HepG2 (cell line): ENCODE measurements at regions of chr16 and their contacts with region 1.

Region 1: DNA sequence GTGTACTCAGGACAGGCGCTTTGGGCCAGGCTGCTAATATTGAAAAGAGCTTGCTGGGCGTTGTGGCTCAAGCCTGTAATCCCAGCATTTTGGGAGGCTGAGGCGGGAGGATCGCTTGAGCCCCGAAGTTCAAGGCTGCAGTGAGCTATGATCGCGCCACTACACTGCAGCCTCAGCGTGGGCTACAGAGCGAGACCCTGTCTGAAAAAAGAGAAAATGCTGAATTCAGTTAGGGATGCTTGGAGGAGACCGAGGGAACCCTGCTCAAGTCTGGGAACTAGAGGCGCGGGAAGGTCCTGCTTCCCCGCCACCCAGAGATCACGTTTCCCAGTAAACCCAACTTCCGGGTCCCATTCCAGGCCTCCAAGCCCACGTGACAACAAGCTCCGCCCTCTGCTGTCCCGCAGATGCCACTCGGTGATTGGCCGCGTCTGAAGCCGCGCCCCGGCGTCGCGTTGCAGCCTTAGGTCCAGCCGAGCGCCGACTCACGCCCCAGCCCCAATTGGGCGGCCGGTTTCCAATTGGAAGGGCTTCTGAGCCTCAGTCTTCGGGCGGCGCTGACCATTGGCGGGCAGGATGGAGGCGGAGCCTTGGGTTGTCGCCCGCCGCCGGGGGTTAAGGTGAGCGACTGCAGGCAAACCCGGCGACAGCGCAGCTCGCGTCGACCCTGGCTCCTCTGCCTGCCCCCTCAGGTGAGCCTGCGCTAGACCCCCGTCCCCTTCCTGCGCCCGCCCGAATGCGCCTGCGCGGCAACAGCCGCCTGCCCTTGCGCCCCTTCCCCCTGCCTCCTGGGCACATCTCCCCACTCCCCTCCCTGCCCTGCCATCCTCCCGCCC is at the start of gene PHKG2:
- DNase-seq: peak; percentile 99
- ATAC-seq: peak; percentile 97
- H3K4me3 ChIP-seq: peak within 1 kb of the TSS; percentile 73 to 89 (median 82)
- H3K27ac ChIP-seq: peak within 1 kb of the TSS; percentile 77
- H3K4me1 ChIP-seq: peaks cover 51% of the 10 kb centered on the region
- H3K27me3 ChIP-seq: no peaks in the 10 kb centered on the region
- CTCF ChIP-seq: no peak
- EP300 ChIP-seq: peak; percentile 28 to 35; a peak in 3 of 4 replicates
- POLR2A ChIP-seq: peak; percentile 92 to 96
- RAD21 ChIP-seq: peak; percentile 22; the same call in 1 of the 2 replicates
- total RNA-seq, gene PHKG2: 33.9 and 37.4 TPM in 2 replicates

Region 2: DNA sequence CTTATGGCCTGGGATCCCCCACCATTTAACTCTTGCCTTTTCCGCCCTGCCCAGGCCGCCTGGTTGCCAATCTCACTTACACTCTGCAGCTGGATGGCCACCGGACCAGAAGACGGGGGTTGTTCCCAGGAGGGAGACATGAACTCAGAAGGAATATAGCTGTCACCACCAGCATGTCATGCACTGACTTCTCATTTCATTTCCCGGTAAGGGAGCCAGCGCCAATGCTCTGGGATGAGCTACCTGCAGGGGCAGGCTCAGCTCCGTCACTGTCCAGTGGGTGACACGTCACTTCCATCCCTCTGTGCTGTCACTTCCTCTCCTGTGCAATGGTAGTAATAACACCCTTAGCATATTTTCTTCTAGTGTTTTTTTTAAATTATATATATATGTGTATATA is 248.7 kb before region 1 on chr16:
- CTCF ChIA-PET with region 1: no interaction called
- POLR2A ChIA-PET with region 1: no interaction called
- in situ Hi-C with region 1: no loop called
- intact Hi-C with region 1: no loop called
- DNase-seq: no peak
- ATAC-seq: peak; percentile 67
- H3K4me3 ChIP-seq: peak overlapping the region in 1 of 3 experiments; percentile 34; a peak in 2 of 6 replicates
- H3K27ac ChIP-seq: no peak overlapping the region
- H3K4me1 ChIP-seq: no peaks in the 10 kb centered on the region
- H3K27me3 ChIP-seq: no peaks in the 10 kb centered on the region; a peak in 1 of 5 replicates
- CTCF ChIP-seq: no peak
- EP300 ChIP-seq: no peak
- POLR2A ChIP-seq: no peak
- RAD21 ChIP-seq: no peak

Region 3: GRCh38 chr16:30657866-30658730 is 89.9 kb before region 1 on chr16 and contains the start of gene FBRS:
- CTCF ChIA-PET with region 1: no interaction called
- POLR2A ChIA-PET with region 1: interaction called, 12 read pairs
- in situ Hi-C with region 1: no loop called
- intact Hi-C with region 1: no loop called
- DNase-seq: peak; percentile 100
- ATAC-seq: peak; percentile 85
- H3K4me3 ChIP-seq: peak within 1 kb of the TSS; percentile 78 to 89 (median 82)
- H3K27ac ChIP-seq: peak within 1 kb of the TSS; percentile 93
- H3K4me1 ChIP-seq: peaks cover 36% of the 10 kb centered on the region
- H3K27me3 ChIP-seq: no peaks in the 10 kb centered on the region; a peak in 1 of 5 replicates
- CTCF ChIP-seq: peak; percentile 97
- EP300 ChIP-seq: peak in 1 of 2 experiments; percentile 22; a peak in 2 of 4 replicates
- POLR2A ChIP-seq: peak; percentile 76 to 86
- RAD21 ChIP-seq: peak; percentile 97
- total RNA-seq, gene FBRS: 10.1 and 16.2 TPM in 2 replicates

Region 4: GRCh38 chr16:30728899-30729672 is 18.9 kb before region 1 on chr16:
- CTCF ChIA-PET with region 1: no interaction called
- POLR2A ChIA-PET with region 1: interaction called, 14 read pairs
- in situ Hi-C with region 1: no loop called
- intact Hi-C with region 1: no loop called
- DNase-seq: no peak
- ATAC-seq: no peak; the same call in 2 of the 3 replicates
- H3K4me3 ChIP-seq: no peak overlapping the region
- H3K27ac ChIP-seq: no peak overlapping the region
- H3K4me1 ChIP-seq: no peaks in the 10 kb centered on the region
- H3K27me3 ChIP-seq: no peaks in the 10 kb centered on the region
- CTCF ChIP-seq: no peak
- EP300 ChIP-seq: no peak
- POLR2A ChIP-seq: no peak
- RAD21 ChIP-seq: no peak

Region 5: DNA sequence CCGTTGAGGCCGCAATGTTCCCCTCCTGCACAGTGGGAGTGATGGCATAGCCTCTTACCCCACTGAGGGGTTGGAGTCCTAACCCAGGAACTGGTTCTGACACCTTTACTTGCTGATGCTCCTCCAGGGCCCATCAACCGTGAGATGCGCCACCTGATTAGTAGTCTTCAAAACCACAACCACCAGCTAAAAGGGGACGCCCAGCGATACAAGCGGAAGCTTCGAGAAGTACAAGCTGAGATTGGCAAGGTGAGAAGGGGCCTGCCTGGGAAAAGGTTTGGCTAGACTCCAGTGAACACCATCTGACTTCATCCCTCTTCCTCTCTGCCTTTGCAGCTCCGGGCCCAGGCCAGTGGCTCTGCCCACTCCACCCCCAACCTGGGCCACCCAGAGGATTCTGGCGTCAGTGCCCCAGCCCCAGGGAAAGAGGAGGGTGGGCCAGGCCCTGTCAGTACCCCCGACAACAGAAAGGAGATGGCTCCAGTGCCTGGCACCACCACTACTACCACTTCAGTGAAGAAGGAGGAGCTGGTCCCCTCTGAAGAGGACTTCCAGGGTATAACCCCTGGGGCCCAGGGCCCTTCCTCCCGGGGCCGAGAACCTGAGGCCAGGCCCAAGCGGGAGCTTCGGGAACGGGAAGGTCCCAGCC is 19.9 kb after region 1 on chr16:
- CTCF ChIA-PET with region 1: no interaction called
- POLR2A ChIA-PET with region 1: interaction called, 18 read pairs
- in situ Hi-C with region 1: no loop called
- intact Hi-C with region 1: no loop called
- DNase-seq: no peak
- ATAC-seq: no peak
- H3K4me3 ChIP-seq: no peak overlapping the region
- H3K27ac ChIP-seq: no peak overlapping the region
- H3K4me1 ChIP-seq: peaks cover 16% of the 10 kb centered on the region
- H3K27me3 ChIP-seq: no peaks in the 10 kb centered on the region; a peak in 1 of 5 replicates
- CTCF ChIP-seq: no peak
- EP300 ChIP-seq: no peak
- POLR2A ChIP-seq: no peak
- RAD21 ChIP-seq: no peak

Region 6: DNA sequence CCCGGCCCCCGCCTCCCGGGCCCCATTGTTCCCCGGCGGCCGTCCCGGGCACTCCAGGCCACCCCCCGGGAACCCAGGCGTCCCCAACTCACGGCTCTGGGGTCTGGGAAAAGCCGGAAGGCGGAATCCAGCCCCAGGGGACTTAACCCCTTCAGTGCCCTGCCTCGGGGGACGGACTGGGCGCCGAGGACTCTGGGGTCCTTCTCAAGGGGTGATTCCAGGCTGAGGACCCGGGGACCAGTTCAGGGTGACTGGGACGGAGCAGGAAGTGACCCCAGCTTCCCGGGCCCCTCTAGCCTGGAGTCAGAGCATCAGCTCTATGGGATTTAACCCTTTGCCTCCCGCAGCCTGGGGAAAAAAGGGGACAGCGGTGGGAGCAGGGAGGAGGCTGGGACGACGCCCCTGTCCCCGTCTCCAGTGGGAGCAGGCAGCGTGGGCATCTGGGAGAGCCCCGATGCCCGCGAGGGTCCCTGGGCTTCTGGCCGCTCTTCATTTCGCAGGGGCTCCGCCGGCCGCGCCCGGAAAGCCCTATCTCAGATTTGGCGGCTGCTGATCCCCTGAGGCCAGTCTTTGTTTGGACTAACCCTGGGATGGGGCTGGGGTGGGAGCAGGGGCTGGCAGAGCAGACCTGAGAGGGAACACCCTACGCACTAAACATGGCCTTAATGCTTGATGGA is 39.1 kb after region 1 on chr16 and contains the start of gene ZNF629:
- CTCF ChIA-PET with region 1: no interaction called
- POLR2A ChIA-PET with region 1: interaction called, 20 read pairs
- in situ Hi-C with region 1: no loop called
- intact Hi-C with region 1: no loop called
- DNase-seq: peak; percentile 79
- ATAC-seq: peak; percentile 83
- H3K4me3 ChIP-seq: peak within 1 kb of the TSS; percentile 99 to 100 (median 100)
- H3K27ac ChIP-seq: peak within 1 kb of the TSS; percentile 78
- H3K4me1 ChIP-seq: peaks cover 30% of the 10 kb centered on the region
- H3K27me3 ChIP-seq: peaks cover 3 to 5% of the 10 kb centered on the region in 2 experiments; a peak in 2 of 5 replicates
- CTCF ChIP-seq: peak; percentile 43
- EP300 ChIP-seq: peak in 1 of 2 experiments; percentile 46; a peak in 2 of 4 replicates
- POLR2A ChIP-seq: peak; percentile 47 to 52
- RAD21 ChIP-seq: peak; percentile 62
- total RNA-seq, gene ZNF629: 14.3 and 16.5 TPM in 2 replicates

Region 7: DNA sequence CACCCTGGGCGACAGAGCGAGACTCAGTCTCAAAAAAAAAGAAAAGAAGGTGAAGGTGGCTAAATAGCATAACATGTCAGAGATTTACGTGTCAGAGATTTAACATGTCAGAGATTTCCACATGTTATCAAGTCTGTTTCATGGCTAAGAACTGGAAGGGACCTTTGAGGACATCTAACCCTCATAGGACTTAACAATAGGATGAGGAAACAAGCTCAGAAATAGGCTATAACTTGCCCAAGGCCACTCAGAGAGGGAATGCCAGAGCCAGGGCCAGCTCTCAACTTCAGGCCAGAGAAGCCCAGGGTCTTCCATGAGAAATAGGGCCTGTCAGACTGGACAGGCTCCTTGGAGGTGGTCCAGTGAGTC is 65.8 kb after region 1 on chr16:
- CTCF ChIA-PET with region 1: no interaction called
- POLR2A ChIA-PET with region 1: interaction called, 35 read pairs
- in situ Hi-C with region 1: no loop called
- intact Hi-C with region 1: loop called (anchors 10 kb)
- DNase-seq: no peak
- ATAC-seq: no peak
- H3K4me3 ChIP-seq: peak overlapping the region; percentile 38 to 70 (median 59); a peak in 5 of 6 replicates
- H3K27ac ChIP-seq: peak overlapping the region; percentile 91
- H3K4me1 ChIP-seq: peaks cover 47% of the 10 kb centered on the region
- H3K27me3 ChIP-seq: no peaks in the 10 kb centered on the region
- CTCF ChIP-seq: no peak
- EP300 ChIP-seq: no peak
- POLR2A ChIP-seq: no peak
- RAD21 ChIP-seq: no peak

Region 8: GRCh38 chr16:30837894-30838505 is 90.0 kb after region 1 on chr16:
- CTCF ChIA-PET with region 1: no interaction called
- POLR2A ChIA-PET with region 1: no interaction called
- in situ Hi-C with region 1: no loop called
- intact Hi-C with region 1: no loop called
- DNase-seq: no peak
- ATAC-seq: no peak
- H3K4me3 ChIP-seq: no peak overlapping the region
- H3K27ac ChIP-seq: peak overlapping the region; percentile 9
- H3K4me1 ChIP-seq: peaks cover 36% of the 10 kb centered on the region
- H3K27me3 ChIP-seq: no peaks in the 10 kb centered on the region
- CTCF ChIP-seq: no peak
- EP300 ChIP-seq: no peak
- POLR2A ChIP-seq: no peak
- RAD21 ChIP-seq: no peak

Region 9: GRCh38 chr16:30972872-30973271 is 224.9 kb after region 1 on chr16:
- CTCF ChIA-PET with region 1: no interaction called
- POLR2A ChIA-PET with region 1: no interaction called
- in situ Hi-C with region 1: no loop called
- intact Hi-C with region 1: no loop called
- DNase-seq: peak; percentile 38
- ATAC-seq: peak; percentile 64
- H3K4me3 ChIP-seq: no peak overlapping the region
- H3K27ac ChIP-seq: no peak overlapping the region
- H3K4me1 ChIP-seq: no peaks in the 10 kb centered on the region
- H3K27me3 ChIP-seq: no peaks in the 10 kb centered on the region
- CTCF ChIP-seq: no peak; the same call in 1 of the 2 replicates
- EP300 ChIP-seq: no peak
- POLR2A ChIP-seq: no peak
- RAD21 ChIP-seq: no peak

Region 10: GRCh38 chr16:31202414-31203375 is 454.7 kb after region 1 on chr16 and contains the start of gene PYCARD:
- CTCF ChIA-PET with region 1: no interaction called
- POLR2A ChIA-PET with region 1: no interaction called
- in situ Hi-C with region 1: no loop called
- intact Hi-C with region 1: no loop called
- DNase-seq: no peak
- ATAC-seq: peak; percentile 23
- H3K4me3 ChIP-seq: peak within 1 kb of the TSS; percentile 61 to 77 (median 61)
- H3K27ac ChIP-seq: no peak within 1 kb of the TSS
- H3K4me1 ChIP-seq: peaks cover 57% of the 10 kb centered on the region
- H3K27me3 ChIP-seq: peaks cover 0 to 35% of the 10 kb centered on the region in 2 experiments; a peak in 4 of 5 replicates
- CTCF ChIP-seq: no peak
- EP300 ChIP-seq: no peak
- POLR2A ChIP-seq: peak in 1 of 2 experiments; percentile 38; a peak in 2 of 4 replicates
- RAD21 ChIP-seq: peak; percentile 19; the same call in 1 of the 2 replicates
- total RNA-seq, gene PYCARD: 4.4 and 4.8 TPM in 2 replicates